ENCODE measurements at regions of chr9 and their contacts with region 1.

Region 1: DNA sequence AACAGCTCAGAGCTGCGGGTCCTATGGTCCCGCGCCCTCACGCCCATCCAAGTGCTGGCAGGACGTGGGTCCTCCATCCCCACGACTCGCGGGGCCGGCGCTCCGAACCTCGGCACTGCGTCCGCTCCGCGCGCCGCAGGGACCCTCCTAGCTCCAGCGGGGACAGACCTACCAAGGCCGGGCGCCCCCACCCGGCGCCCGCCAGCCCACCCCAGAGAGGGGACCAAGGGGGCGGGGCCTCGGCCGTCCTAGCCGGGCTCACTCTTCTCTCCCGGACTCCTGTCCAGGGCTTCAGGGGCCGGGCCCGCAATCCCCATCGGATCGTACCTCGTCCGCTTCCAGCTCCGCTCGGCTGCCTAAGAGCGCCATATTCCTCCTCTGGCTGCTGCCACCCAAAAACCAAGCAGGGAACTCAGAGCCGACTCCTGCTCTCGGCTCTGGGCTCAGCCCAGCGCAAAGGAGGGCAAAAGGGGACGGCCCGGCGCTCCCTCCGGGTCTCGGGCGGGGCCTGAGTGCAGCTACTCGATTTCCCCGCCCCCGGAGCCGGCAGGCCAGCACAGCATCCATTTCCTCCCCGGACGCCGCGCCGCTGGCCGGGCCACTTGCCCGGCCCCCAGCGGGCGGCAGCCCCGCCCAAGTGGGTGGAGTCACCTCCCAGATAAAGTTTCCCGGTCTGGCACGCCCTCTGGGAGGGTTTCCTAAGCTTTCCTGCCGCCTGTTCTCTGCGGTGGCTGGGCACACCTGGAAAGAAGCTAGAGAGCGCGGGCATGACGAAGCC is at the start of gene TTC39B:
- DNase-seq: peak; percentile 79
- H3K4me3 Mint-ChIP-seq: peak within 1 kb of the TSS; percentile 98
- H3K27ac Mint-ChIP-seq: peak within 1 kb of the TSS; percentile 94
- H3K4me1 Mint-ChIP-seq: peaks cover 49% of the 10 kb centered on the region
- H3K27me3 Mint-ChIP-seq: no peaks in the 10 kb centered on the region
- total RNA-seq, gene TTC39B: 8.9 and 10.5 TPM in 2 replicates

Region 2: GRCh38 chr9:15286161-15286821 is 20.7 kb before region 1 on chr9:
- intact Hi-C with region 1: loop called (anchors 2 kb)
- DNase-seq: no peak
- H3K4me3 Mint-ChIP-seq: no peak overlapping the region
- H3K27ac Mint-ChIP-seq: peak overlapping the region; percentile 0
- H3K4me1 Mint-ChIP-seq: peaks cover 26% of the 10 kb centered on the region
- H3K27me3 Mint-ChIP-seq: no peaks in the 10 kb centered on the region

Region 3: GRCh38 chr9:15349892-15350778 is 43.2 kb after region 1 on chr9:
- intact Hi-C with region 1: loop called (anchors 5 kb)
- DNase-seq: no peak
- H3K4me3 Mint-ChIP-seq: no peak overlapping the region
- H3K27ac Mint-ChIP-seq: no peak overlapping the region
- H3K4me1 Mint-ChIP-seq: peaks cover 12% of the 10 kb centered on the region
- H3K27me3 Mint-ChIP-seq: no peaks in the 10 kb centered on the region